Psoas muscle (tissue), 8 donors: ENCODE measurements at regions of chr9 and their contacts with region 1.

Region 1: DNA sequence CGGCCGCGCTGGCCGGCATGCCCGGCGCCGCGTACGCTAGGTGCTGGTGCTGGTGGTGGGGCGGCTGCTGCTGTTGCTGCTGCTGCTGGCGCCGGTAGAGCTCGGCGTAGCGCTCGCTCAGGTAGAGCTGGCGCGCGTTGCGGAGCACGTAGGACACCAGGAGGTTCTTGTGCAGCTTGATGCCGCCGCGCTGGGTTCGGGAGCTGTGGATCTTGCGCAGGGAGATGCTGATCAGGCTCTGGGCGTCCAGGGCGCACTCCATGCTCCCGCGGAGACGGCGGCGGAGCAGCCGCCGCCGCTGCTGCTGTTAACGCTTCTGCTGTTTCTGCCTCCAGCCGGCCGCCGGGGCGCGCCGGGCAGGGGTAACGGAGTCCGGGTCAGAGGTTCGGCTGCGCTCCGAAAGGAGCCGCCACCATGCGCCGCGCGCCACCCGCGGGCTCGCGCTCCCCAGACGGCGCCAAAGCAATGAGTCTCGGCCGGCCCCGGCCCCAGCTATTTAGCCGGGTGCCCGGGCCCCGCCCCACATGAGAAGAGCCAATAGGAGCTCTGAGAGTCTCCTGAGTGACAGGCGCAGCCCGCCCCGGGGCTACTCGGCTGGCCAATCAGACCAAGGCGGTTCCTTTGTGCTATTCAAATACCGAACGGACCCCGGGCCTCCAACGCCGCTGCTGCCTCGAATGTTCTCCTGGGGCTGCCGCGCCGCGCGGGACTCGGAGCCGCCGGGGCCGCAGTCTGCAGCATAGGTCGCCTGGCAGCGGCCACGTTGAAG is at the start of gene IER5L:
- DNase-seq: peak; percentile 96 to 97
- ATAC-seq: peak; percentile 89 to 90 (median 90)
- H3K4me3 ChIP-seq: peak within 1 kb of the TSS; percentile 86
- H3K27ac ChIP-seq: peak within 1 kb of the TSS; percentile 89
- H3K4me1 ChIP-seq: peaks cover 17% of the 10 kb centered on the region
- H3K27me3 ChIP-seq: no peaks in the 10 kb centered on the region
- CTCF ChIP-seq: no peak
- total RNA-seq, gene IER5L: 1.7 to 4.5 (median 3.4) TPM

Region 2: DNA sequence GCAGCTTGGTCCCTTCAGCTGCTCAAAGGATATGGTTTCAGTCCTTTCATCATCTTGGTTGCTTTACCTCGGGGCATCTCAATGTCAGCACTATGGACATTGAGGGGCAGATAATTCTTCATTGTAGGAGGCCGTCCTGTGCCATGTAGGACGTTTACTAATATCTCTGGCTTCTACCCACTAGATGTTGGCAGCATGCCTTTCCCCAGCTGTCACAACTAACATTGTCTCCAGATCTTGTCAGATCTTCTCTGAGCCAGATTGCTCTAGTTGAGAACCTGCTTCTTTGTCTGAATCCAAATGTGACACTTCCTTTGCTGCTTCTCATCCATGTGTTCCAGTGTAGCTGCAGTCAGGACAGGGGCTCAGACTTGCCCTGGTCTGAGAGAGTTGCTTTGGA is 56.5 kb before region 1 on chr9:
- intact Hi-C with region 1: no loop called
- DNase-seq: peak; percentile 51 to 69
- ATAC-seq: peak; percentile 81 to 90 (median 88)
- H3K4me3 ChIP-seq: no peak overlapping the region
- H3K27ac ChIP-seq: peak overlapping the region; percentile 72
- H3K4me1 ChIP-seq: peaks cover 18% of the 10 kb centered on the region
- H3K27me3 ChIP-seq: no peaks in the 10 kb centered on the region
- CTCF ChIP-seq: no peak

Region 3: DNA sequence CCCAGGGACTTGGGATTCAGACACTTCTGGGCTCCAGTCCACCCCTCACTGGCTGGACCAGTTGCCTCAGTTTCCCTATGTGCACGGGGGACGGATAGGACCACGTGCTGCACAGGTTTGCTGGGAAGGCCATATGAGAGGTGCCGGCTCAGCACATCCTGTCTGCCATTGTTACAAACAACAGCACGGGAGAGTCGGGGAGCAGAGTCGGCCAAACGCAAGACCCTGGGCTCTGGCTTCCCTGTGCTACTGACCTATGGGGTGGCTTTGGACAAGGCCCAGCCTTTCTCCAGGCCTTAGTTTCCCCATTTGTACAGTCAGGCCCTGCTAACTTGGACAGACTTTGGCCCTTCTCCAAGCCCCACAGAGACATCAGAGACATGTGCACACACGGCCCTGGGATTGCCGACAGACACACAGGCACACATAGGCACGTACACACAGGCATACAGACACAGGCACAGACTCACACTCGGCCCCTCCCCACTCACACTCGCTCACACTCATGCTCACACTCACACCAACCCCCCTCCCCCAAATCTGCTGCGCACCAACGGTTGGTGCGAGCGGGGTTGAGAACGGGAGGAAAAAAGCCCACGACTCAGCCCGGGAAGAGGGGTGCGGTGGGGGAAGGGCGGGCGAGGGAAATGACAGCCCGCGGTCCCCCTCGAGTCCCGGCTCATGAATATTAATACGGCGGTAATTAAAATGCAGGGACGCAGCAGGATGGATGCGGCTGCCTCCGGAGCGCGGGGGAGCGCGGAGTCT is 309.9 kb after region 1 on chr9:
- intact Hi-C with region 1: loop called in 1 of 2 experiments (anchors 2 kb)
- DNase-seq: peak in 1 of 2 donors; percentile 70
- ATAC-seq: peak; percentile 6 to 27 (median 19)
- H3K4me3 ChIP-seq: peak overlapping the region; percentile 70
- H3K27ac ChIP-seq: peak overlapping the region; percentile 95
- H3K4me1 ChIP-seq: peaks cover 45% of the 10 kb centered on the region
- H3K27me3 ChIP-seq: no peaks in the 10 kb centered on the region
- CTCF ChIP-seq: no peak

Region 4: GRCh38 chr9:129610473-129611301 is 432.7 kb after region 1 on chr9:
- intact Hi-C with region 1: loop called (anchors 1 to 5 kb)
- DNase-seq: peak; percentile 78 to 87
- ATAC-seq: peak; percentile 71 to 86 (median 81)
- H3K4me3 ChIP-seq: peak overlapping the region; percentile 73
- H3K27ac ChIP-seq: peak overlapping the region; percentile 74
- H3K4me1 ChIP-seq: peaks cover 18% of the 10 kb centered on the region
- H3K27me3 ChIP-seq: no peaks in the 10 kb centered on the region
- CTCF ChIP-seq: peak; percentile 96